Heart right ventricle (tissue), 16 donors: ENCODE measurements at regions of chr5 and their contacts with region 1.

Region 1: DNA sequence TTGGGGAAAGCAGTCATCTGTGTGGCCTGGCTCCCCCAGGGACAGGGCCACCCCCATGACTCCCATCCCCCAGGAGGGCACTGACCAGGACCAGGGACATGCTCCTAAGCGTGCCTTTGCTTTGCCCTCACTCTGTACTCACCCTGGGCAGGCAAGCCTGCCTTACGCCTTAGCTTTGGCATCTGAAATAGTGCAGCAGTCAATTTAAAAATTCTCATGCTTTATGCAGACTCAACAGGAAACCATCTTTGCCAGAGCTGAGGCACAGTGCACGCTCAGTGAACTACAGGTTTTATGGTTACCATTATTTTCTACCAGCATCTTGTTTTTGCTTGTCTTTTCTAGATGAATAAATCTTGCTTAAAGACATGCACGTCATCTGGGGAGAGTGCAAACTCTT is 323.5 kb downstream of the IRX2 start:
- DNase-seq: no peak
- ATAC-seq: no peak
- H3K4me3 ChIP-seq: no peak overlapping the region
- H3K27ac ChIP-seq: no peak overlapping the region
- H3K4me1 ChIP-seq: no peaks in the 10 kb centered on the region
- H3K27me3 ChIP-seq: peaks cover 0 to 14% (median 0%) of the 10 kb centered on the region in 7 donors
- CTCF ChIP-seq: no peak

Region 2: DNA sequence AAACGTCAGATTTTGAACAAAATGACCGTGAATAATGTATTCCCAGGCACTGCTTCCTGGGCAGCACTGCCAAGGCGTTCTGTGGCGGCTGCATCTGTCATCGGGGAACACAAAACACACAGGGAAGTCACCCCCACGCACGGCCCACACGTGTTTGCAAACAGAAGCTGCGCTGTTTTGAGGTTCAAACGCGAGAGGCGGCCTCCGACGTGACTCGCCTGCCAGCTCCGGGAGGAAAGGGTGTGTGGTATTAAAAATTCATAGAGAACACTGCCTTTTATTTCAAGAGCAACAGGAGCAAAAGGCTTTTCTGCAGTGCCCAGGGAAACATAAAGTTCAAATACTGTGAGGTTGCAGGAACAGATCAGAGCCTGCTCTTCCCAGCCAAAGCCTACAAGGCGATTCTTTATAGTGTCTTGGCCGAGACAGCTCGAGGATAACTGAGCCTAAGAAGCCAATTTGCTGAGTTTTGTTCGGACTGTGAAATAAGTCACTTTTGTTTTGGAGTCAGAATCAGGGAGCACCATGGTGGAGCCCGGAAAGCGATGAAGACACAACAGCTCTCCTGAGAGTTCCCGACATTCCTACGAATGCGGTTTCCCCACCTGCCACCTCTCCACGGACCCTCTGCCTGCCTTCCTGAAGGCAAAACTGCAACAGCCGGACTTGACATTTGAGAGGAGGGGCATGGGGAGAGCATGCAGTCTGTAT is 438.8 kb after region 1 on chr5:
- intact Hi-C with region 1: loop called in 1 of 10 experiments (anchors 5 kb)
- DNase-seq: no peak
- ATAC-seq: no peak
- H3K4me3 ChIP-seq: no peak overlapping the region
- H3K27ac ChIP-seq: no peak overlapping the region
- H3K4me1 ChIP-seq: no peaks in the 10 kb centered on the region
- H3K27me3 ChIP-seq: peaks cover 0 to 16% (median 0%) of the 10 kb centered on the region in 7 donors
- CTCF ChIP-seq: no peak